Panc1 (cell line): ENCODE measurements at regions of chr11 and their contacts with region 1.

Region 1: GRCh38 chr11:65973439-65974110 is 12.0 kb downstream of the SART1 start:
- DNase-seq: no peak
- ATAC-seq: no peak
- H3K4me3 ChIP-seq: no peak overlapping the region
- H3K27ac ChIP-seq: no peak overlapping the region
- H3K4me1 ChIP-seq: peaks cover 5% of the 10 kb centered on the region; the same call in 1 of the 2 replicates
- H3K27me3 ChIP-seq: no peaks in the 10 kb centered on the region
- CTCF ChIP-seq: no peak

Region 2: DNA sequence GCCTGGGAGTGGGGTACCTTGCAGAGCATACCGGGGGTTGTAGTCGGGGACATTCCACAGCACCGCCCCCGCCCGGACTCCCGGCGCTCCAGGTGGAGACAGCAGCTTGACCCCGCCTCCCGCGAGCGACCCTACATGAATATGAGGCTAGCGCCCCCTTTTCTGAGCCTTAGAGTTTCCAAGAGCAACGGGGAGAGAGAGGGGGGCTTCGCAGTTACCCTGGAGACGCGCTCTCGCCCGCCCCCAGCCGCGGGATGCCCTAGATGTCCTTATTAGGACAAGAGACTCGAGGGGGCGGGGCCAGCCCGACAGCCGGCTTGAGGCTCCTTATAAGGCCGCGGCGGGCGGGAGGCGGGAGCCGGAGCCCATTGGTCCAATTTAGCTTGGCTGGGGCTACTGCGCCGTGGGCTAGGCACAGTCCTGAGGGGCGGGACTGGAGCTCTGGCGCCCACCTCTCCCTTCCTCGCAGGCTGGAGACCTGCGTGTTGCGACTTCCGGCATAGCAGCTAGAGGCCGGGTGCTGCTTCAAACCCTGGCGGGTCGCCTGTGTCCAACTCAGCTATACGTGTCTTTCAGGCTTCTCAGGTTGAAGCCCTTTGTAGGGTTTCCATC is 114.3 kb before region 1 on chr11:
- CTCF ChIA-PET with region 1: no interaction called
- POLR2A ChIA-PET with region 1: interaction called, 12 read pairs
- in situ Hi-C with region 1: no loop called
- intact Hi-C with region 1: no loop called
- DNase-seq: peak; percentile 88
- ATAC-seq: peak; percentile 74
- H3K4me3 ChIP-seq: peak overlapping the region; percentile 85 to 99
- H3K27ac ChIP-seq: peak overlapping the region; percentile 98
- H3K4me1 ChIP-seq: peaks cover 45% of the 10 kb centered on the region
- H3K27me3 ChIP-seq: no peaks in the 10 kb centered on the region
- CTCF ChIP-seq: no peak

Region 3: DNA sequence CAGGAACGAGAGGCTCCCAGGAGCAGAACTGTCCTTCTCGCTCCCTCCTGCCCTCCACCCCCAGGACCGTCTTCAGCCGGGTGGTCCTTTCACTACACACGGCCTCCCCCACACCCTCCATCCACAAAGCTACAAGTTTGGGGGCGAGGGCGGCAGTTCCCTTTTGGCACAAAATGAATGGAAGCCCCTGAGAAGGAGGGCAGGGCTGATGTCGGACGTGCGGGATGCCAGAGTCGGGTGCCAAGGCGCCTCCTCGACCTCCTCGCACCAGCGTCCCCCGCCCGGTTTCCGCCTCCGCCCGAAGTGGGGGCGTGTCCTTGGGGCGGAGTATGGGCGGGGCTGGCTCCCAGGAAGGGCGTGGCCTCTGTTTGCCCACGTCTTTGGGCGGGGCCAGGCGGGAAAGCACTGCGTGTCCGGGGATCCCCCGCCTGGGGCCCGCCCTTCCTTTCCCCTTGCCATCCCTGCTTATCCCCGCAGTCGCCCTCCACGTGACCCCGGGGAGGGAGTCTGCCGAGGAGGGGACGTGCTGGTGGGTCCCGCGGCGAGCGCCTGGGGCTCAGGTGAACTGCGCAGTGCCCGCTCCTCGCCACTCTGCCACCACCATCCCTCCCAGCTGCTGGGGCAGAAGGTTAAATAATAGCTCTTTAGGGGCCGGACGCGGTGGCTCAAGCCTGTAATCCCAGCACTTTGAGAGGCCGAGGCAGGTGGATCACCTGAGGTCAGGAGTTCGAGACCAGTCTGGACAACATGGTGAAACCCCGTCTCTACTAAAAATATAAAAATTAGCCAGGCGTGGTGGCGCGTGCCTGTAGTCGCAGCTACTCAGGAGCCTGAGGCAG is 100.0 kb before region 1 on chr11:
- CTCF ChIA-PET with region 1: interaction called, 10 read pairs
- POLR2A ChIA-PET with region 1: no interaction called
- in situ Hi-C with region 1: no loop called
- intact Hi-C with region 1: no loop called
- DNase-seq: no peak
- ATAC-seq: peak; percentile 83
- H3K4me3 ChIP-seq: peak overlapping the region; percentile 57 to 73
- H3K27ac ChIP-seq: peak overlapping the region; percentile 86
- H3K4me1 ChIP-seq: peaks cover 12% of the 10 kb centered on the region
- H3K27me3 ChIP-seq: no peaks in the 10 kb centered on the region
- CTCF ChIP-seq: no peak

Region 4: GRCh38 chr11:65927904-65928397 is 45.6 kb before region 1 on chr11:
- CTCF ChIA-PET with region 1: interaction called, 16 read pairs
- POLR2A ChIA-PET with region 1: no interaction called
- in situ Hi-C with region 1: no loop called
- intact Hi-C with region 1: no loop called
- DNase-seq: no peak
- ATAC-seq: peak; percentile 31
- H3K4me3 ChIP-seq: no peak overlapping the region
- H3K27ac ChIP-seq: no peak overlapping the region
- H3K4me1 ChIP-seq: peaks cover 14% of the 10 kb centered on the region
- H3K27me3 ChIP-seq: no peaks in the 10 kb centered on the region
- CTCF ChIP-seq: no peak

Region 5: GRCh38 chr11:66317723-66318599 is 344.4 kb after region 1 on chr11:
- CTCF ChIA-PET with region 1: no interaction called
- POLR2A ChIA-PET with region 1: no interaction called
- in situ Hi-C with region 1: no loop called
- intact Hi-C with region 1: no loop called
- DNase-seq: no peak
- ATAC-seq: no peak
- H3K4me3 ChIP-seq: no peak overlapping the region
- H3K27ac ChIP-seq: no peak overlapping the region
- H3K4me1 ChIP-seq: peaks cover 4% of the 10 kb centered on the region; the same call in 1 of the 2 replicates
- H3K27me3 ChIP-seq: no peaks in the 10 kb centered on the region
- CTCF ChIP-seq: no peak